ENCODE measurements at regions of chr1 and their contacts with region 1.

Region 1: GRCh38 chr1:86788300-86789206 is 84.2 kb downstream of the SH3GLB1 start:
- DNase-seq: peak; percentile 17 to 89
- H3K4me3 ChIP-seq: peak overlapping the region in 1 of 2 donors; percentile 21
- H3K27ac ChIP-seq: peak overlapping the region; percentile 64 to 77
- H3K4me1 ChIP-seq: peaks cover 0 to 22% of the 10 kb centered on the region in 2 donors
- H3K27me3 ChIP-seq: no peaks in the 10 kb centered on the region
- CTCF ChIP-seq: no peak

Region 2: DNA sequence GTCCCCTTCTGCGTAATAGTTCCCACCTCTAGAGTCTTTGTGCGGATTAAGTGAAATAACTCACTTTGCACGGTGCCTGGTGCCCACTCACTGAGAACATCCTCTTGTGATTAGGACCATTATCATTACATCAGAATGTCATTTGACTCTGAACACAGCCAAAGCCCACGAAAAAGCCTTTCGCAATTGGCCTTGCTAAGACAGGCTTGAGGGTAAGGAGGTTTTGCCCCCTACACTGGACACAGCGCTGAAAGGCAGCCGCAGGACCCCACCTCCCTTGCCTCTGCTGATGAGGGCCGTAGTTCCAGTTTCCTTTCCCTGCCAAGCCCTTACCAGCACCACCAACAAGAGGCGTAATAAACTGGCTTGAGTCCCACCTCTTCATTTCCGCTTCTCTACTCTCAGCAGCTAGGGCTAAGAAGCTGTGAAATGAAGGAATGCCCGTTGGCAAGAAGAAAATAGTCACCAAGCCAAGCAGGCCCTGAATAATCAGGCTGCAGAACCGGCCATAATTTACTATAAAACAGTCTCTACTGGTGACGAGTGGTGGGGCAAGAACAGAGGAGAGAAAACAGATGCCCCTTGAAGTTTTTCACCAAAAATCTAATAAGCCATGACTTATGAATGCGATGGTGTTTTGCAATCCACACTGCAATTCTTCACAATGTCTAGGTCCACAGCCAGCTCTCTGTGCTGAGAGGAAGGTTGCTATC is 31.1 kb before region 1 on chr1:
- intact Hi-C with region 1: loop called (anchors 2 kb)
- DNase-seq: peak in 1 of 2 donors; percentile 81
- H3K4me3 ChIP-seq: peak overlapping the region in 1 of 2 donors; percentile 26
- H3K27ac ChIP-seq: peak overlapping the region; percentile 70 to 71
- H3K4me1 ChIP-seq: no peaks in the 10 kb centered on the region
- H3K27me3 ChIP-seq: no peaks in the 10 kb centered on the region
- CTCF ChIP-seq: no peak

Region 3: DNA sequence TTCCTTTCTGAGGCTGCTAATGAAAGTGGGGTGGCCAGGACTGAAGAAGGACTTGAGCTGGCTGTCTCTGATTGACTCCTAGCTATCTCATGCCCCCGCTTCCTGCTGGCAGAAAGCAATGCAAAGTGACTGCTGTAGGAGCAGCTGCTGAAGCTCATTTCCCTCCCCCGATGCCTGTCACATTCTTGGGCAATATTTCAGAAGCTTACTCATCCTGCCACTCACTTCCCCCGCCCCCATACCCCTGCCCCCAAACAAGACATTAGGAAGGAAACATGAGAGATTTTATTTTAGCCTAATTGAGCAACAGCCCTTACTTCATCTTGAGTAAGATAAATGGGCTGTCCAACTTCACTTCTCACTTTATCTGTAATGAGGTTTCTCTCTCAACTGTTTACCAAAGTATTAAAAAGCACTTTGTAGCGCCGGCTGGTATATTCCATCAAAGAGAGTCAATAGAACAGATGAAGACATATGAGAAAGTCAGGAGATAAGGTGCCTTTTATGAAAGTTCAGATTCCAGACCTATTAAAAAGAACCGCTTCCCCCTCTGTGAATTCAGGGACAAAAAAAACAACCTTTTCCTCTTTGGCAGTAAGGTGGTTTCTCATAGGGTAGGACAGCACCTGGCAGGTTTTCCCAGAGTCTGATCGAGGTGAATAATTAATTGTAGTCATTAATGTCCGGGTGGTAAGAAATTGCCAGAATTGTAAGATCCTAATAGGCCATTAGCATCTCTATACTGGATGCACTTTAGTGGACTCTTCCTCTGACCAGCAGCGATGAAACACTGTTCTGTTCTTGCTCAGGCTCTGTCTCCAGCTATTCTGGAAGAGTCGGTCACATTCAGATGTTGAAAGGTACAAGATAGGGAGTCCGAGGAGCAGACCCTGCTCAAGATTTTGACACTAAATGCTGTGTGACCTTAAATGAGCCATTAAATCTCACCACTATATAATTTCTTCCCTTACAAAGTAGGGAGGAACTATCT is 14.0 kb before region 1 on chr1:
- intact Hi-C with region 1: loop called (anchors 1 kb)
- DNase-seq: peak; percentile 39 to 80
- H3K4me3 ChIP-seq: peak overlapping the region in 1 of 2 donors; percentile 16
- H3K27ac ChIP-seq: peak overlapping the region; percentile 47 to 58
- H3K4me1 ChIP-seq: peaks cover 2 to 19% of the 10 kb centered on the region in 2 donors
- H3K27me3 ChIP-seq: no peaks in the 10 kb centered on the region
- CTCF ChIP-seq: no peak

Measured in ascending aorta (tissue), 2 donors.